Vagina (tissue), 2 donors: ENCODE measurements at regions of chr7 and their contacts with region 1.

Region 1: GRCh38 chr7:72317341-72317740 is 94.8 kb downstream of the CALN1 start:
- DNase-seq: no peak
- H3K4me3 ChIP-seq: no peak overlapping the region
- H3K27ac ChIP-seq: no peak overlapping the region
- H3K4me1 ChIP-seq: no peaks in the 10 kb centered on the region
- H3K27me3 ChIP-seq: no peaks in the 10 kb centered on the region
- CTCF ChIP-seq: no peak
- POLR2A ChIP-seq: no peak

Region 2: DNA sequence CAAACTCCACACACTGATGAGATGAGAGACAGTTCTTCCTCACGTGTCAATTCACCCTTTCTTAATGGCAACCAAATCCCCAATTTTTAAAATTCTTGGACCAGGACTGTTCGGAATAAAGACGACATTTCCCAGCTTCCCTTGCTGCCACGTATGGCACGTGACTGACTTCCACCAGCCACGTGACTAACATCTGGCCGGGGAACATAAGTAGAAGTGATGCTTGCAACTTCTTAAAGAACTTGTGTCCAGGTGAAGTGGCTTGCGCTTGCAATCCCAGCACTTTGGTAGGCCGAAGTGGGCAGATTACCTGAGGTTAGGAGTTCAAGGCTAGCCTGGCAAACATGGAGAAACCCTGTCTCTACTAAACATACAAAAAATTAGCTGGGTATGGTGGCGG is 310.3 kb before region 1 on chr7:
- intact Hi-C with region 1: loop called (anchors 5 kb)
- DNase-seq: peak in 1 of 2 donors; percentile 52
- H3K4me3 ChIP-seq: no peak overlapping the region
- H3K27ac ChIP-seq: no peak overlapping the region
- H3K4me1 ChIP-seq: no peaks in the 10 kb centered on the region
- H3K27me3 ChIP-seq: no peaks in the 10 kb centered on the region
- CTCF ChIP-seq: no peak
- POLR2A ChIP-seq: no peak

Region 3: GRCh38 chr7:72386118-72386517 is 68.8 kb after region 1 on chr7:
- intact Hi-C with region 1: loop called (anchors 1 kb)
- DNase-seq: no peak
- H3K4me3 ChIP-seq: no peak overlapping the region
- H3K27ac ChIP-seq: no peak overlapping the region
- H3K4me1 ChIP-seq: no peaks in the 10 kb centered on the region
- H3K27me3 ChIP-seq: no peaks in the 10 kb centered on the region
- CTCF ChIP-seq: no peak
- POLR2A ChIP-seq: no peak